K562 (cell line): ENCODE measurements at regions of chr19 and their contacts with region 1.

Region 1: DNA sequence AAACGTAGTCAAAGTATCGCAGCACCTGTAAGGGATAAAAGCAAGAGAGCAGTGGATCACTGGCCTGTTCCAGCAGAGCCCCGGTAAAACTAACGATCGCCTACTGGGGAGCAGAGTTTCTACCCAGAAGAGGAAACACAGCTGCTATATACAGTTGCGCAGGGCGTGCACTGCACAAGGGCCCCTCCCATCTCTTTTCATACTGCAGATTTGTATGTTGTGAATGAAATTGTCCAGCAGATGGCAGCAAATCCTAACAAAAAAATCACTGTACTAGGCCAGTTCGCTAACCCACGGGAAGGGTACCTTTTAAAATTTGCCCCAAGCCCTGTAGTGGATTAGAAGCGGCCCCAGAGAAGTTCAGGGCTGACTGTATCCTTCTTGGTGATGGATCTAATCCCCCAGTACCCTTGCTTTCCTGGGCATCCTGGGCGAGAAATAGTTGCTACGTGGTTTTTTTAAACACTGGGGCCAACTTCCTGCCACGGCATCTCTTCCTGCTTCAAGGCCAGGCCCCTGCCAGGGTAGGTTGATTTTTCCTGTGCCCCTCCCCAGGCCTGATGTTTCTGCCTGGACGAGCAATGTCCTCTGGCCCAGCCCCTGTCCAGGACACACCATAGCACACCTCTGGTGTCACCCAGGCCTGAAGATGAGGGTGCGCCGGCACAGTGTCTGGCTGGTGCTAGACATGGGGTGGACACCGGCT is 127.0 kb downstream of the IER2 start:
- DNase-seq: peak; percentile 72 to 86 (median 78)
- ATAC-seq: peak; percentile 98
- H3K4me3 ChIP-seq: no peak overlapping the region
- H3K27ac ChIP-seq: no peak overlapping the region
- H3K4me1 ChIP-seq: peaks cover 2 to 8% of the 10 kb centered on the region in 2 experiments; a peak in 3 of 5 replicates
- H3K27me3 ChIP-seq: peaks cover 0 to 6% of the 10 kb centered on the region in 2 experiments; a peak in 2 of 5 replicates
- CTCF ChIP-seq: peak; percentile 72 to 86 (median 73)
- EP300 ChIP-seq: no peak
- POLR2A ChIP-seq: no peak
- RAD21 ChIP-seq: peak; percentile 70 to 84

Region 2: GRCh38 chr19:13291759-13292312 is 14.6 kb after region 1 on chr19:
- CTCF ChIA-PET with region 1: no interaction called
- POLR2A ChIA-PET with region 1: no interaction called
- in situ Hi-C with region 1: no loop called
- intact Hi-C with region 1: no loop called
- DNase-seq: no peak
- ATAC-seq: no peak
- H3K4me3 ChIP-seq: no peak overlapping the region
- H3K27ac ChIP-seq: no peak overlapping the region
- H3K4me1 ChIP-seq: no peaks in the 10 kb centered on the region
- H3K27me3 ChIP-seq: peaks cover 2 to 14% of the 10 kb centered on the region in 2 experiments; a peak in 2 of 5 replicates
- CTCF ChIP-seq: no peak
- EP300 ChIP-seq: no peak
- POLR2A ChIP-seq: no peak
- RAD21 ChIP-seq: no peak

Region 3: GRCh38 chr19:13302526-13303270 is 25.4 kb after region 1 on chr19:
- CTCF ChIA-PET with region 1: no interaction called
- POLR2A ChIA-PET with region 1: no interaction called
- in situ Hi-C with region 1: no loop called
- intact Hi-C with region 1: no loop called
- DNase-seq: no peak
- ATAC-seq: no peak
- H3K4me3 ChIP-seq: no peak overlapping the region
- H3K27ac ChIP-seq: no peak overlapping the region
- H3K4me1 ChIP-seq: peaks cover 0 to 9% of the 10 kb centered on the region in 2 experiments; a peak in 2 of 5 replicates
- H3K27me3 ChIP-seq: peaks cover 16 to 74% of the 10 kb centered on the region in 2 experiments; a peak in 4 of 5 replicates
- CTCF ChIP-seq: no peak
- EP300 ChIP-seq: no peak
- POLR2A ChIP-seq: no peak
- RAD21 ChIP-seq: no peak

Region 4: GRCh38 chr19:13334801-13335481 is 57.7 kb after region 1 on chr19:
- CTCF ChIA-PET with region 1: no interaction called
- POLR2A ChIA-PET with region 1: interaction called, 3 read pairs
- in situ Hi-C with region 1: no loop called
- intact Hi-C with region 1: loop called (anchors 1 kb)
- DNase-seq: peak in 1 of 4 experiments; percentile 18
- ATAC-seq: no peak
- H3K4me3 ChIP-seq: no peak overlapping the region
- H3K27ac ChIP-seq: no peak overlapping the region
- H3K4me1 ChIP-seq: no peaks in the 10 kb centered on the region
- H3K27me3 ChIP-seq: peaks cover 3 to 14% of the 10 kb centered on the region in 2 experiments; a peak in 3 of 5 replicates
- CTCF ChIP-seq: peak; percentile 17 to 21 (median 19); a peak in 2 of 6 replicates
- EP300 ChIP-seq: no peak
- POLR2A ChIP-seq: no peak
- RAD21 ChIP-seq: peak in 1 of 2 experiments; percentile 8; a peak in 1 of 4 replicates

Region 5: DNA sequence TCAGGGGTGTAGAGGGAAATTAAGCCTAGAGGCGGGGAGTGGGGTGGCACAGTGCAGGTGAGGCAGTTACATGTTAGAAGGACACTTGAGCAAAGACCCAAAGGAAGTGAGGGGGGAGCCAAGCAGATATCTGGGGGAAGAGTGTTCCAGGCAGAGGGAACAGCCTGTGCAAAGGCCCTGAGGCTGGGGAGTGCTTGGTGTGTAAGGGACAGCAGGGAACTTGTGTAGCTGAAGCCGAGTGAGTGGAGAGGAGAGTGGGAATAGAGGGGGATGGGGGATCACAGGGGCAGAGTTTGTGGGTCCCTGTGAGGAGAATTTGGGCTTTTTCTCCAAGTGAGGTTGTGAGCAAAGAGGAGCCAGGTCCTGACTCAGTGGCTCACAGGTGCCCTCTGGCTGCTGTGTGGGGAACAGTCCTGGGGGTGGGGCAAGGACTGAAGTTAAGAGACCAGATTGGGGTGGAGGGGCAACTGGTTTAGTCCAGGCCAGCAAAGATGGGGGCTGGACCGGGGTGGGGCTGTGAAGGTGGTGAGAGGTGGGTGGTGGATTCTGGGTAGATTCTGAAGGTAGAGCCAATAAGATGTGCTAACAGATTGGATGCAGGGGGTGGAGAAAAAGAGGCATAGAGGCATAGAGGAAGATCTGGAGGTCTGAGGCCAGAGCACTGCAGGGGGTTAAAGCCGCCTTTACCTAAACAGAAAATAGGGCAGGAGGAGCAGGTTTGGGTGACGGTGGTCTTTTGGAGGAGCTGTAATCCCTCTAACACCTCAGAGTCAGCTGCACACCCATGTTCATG is 153.7 kb after region 1 on chr19:
- CTCF ChIA-PET with region 1: interaction called, 34 read pairs
- POLR2A ChIA-PET with region 1: no interaction called
- in situ Hi-C with region 1: no loop called
- intact Hi-C with region 1: loop called (anchors 1 kb)
- DNase-seq: peak; percentile 56 to 76 (median 62)
- ATAC-seq: peak; percentile 92
- H3K4me3 ChIP-seq: no peak overlapping the region
- H3K27ac ChIP-seq: no peak overlapping the region
- H3K4me1 ChIP-seq: no peaks in the 10 kb centered on the region; a peak in 2 of 5 replicates
- H3K27me3 ChIP-seq: peaks cover 0 to 5% of the 10 kb centered on the region in 2 experiments; a peak in 1 of 5 replicates
- CTCF ChIP-seq: peak; percentile 87 to 90 (median 88)
- EP300 ChIP-seq: no peak
- POLR2A ChIP-seq: no peak
- RAD21 ChIP-seq: peak; percentile 44 to 77

Region 6: DNA sequence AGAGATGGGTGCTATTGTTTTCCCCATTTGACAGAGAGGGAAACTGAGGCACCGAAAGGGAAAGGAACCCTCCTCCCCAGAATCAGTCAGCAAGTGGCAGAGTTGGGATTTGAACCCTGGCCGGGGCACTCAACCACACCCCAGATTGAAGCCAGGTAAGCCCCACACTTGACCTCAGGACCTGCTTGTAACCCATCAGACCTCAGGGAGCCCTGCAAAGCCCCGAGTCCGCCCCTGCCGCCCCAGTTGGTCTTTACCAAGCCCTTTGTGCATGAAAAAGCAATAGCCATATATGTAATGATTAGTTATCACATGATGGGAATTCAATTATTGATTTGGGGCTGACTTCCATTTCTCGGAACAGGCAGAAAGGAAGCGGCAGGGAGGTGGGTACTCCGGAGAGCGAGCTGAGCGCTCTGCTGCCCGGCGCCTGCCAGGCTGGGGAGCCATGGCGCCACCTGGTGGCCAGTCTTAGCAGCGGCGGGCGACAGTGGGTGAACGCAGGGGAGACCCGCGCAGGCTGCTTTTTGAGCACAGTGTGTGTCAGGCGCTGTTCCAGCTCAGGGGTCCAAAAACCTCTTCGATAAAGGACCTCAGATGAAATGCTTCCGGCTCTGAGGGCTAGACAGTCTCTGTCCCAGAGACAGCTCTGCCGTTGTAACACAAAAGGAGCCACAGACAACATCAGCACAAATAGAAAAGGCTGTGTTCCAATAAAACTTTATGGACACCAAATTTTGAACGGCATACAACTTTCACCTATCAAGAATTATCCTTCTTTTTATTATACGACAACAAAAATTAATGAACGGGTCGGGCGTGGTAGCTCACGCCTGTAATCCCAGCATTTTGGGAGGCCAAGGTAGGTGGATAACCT is 311.9 kb after region 1 on chr19:
- CTCF ChIA-PET with region 1: interaction called, 21 read pairs
- POLR2A ChIA-PET with region 1: no interaction called
- in situ Hi-C with region 1: loop called (anchors 5 kb)
- intact Hi-C with region 1: loop called (anchors 2 kb)
- DNase-seq: peak; percentile 71 to 83 (median 78)
- ATAC-seq: peak; percentile 98
- H3K4me3 ChIP-seq: no peak overlapping the region
- H3K27ac ChIP-seq: no peak overlapping the region
- H3K4me1 ChIP-seq: peaks cover 0 to 7% of the 10 kb centered on the region in 2 experiments; a peak in 1 of 5 replicates
- H3K27me3 ChIP-seq: peaks cover 0 to 4% of the 10 kb centered on the region in 2 experiments; a peak in 1 of 5 replicates
- CTCF ChIP-seq: peak; percentile 88 to 95 (median 93)
- EP300 ChIP-seq: no peak
- POLR2A ChIP-seq: no peak
- RAD21 ChIP-seq: peak; percentile 71 to 85

Region 7: DNA sequence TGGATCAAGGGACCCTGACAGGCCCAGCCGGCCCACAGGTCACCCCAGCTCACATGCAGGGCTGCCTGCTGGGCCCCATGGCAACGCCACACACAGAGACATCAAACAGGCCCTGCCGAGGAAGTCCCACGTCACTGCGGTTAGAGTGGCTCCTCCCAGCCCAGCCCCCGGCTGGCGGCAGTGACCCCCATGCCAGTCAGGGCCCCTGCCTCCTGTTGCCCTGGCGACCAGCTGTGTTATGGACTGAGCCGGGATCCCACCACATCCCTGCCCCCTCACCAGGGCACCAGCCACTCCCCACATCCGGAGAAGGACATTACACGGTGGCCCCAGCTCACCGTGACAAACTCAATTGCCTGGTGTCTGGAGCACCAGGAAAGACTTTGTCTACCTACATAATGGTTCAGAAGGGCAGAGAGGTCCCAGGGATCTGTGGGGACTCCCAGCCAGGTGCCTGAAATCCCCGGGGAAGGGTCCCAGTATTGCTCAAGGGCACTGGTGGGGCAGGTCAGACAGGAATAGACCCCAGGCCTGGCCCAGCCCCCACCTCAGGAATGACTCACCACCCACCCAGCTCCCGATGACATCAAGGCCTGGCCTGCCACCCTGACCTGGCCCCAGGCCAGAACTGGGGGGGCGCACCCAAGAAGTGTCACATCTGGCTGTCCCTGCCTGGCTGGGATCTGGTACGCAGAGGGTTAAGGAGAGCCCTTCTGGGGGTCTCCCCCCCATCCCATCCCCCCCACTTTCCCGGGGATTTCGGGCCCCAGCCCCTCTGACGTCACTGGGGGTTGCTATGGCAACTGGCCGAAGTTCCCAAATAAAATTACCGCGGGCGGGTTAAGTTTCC is 569.5 kb after region 1 on chr19:
- CTCF ChIA-PET with region 1: no interaction called
- POLR2A ChIA-PET with region 1: no interaction called
- in situ Hi-C with region 1: loop called (anchors 10 kb)
- intact Hi-C with region 1: no loop called
- DNase-seq: peak; percentile 74 to 92 (median 84)
- ATAC-seq: peak; percentile 41
- H3K4me3 ChIP-seq: peak overlapping the region; percentile 49
- H3K27ac ChIP-seq: peak overlapping the region; percentile 98
- H3K4me1 ChIP-seq: peaks cover 50 to 89% of the 10 kb centered on the region in 2 experiments
- H3K27me3 ChIP-seq: no peaks in the 10 kb centered on the region
- CTCF ChIP-seq: no peak
- EP300 ChIP-seq: peak; percentile 41; the same call in 1 of the 2 replicates
- POLR2A ChIP-seq: no peak
- RAD21 ChIP-seq: no peak